Activated naive CD4-positive, alpha-beta T cell treated with anti-CD3 and anti-CD28 coated beads for 36 hours (primary cell): ENCODE measurements at regions of chr5 and their contacts with region 1.

Region 1: GRCh38 chr5:147188200-147189108 is 46.4 kb upstream of the STK32A start:
- DNase-seq: peak; percentile 61
- H3K4me3 Mint-ChIP-seq: no peak overlapping the region
- H3K27ac Mint-ChIP-seq: no peak overlapping the region
- H3K4me1 Mint-ChIP-seq: no peaks in the 10 kb centered on the region
- H3K27me3 Mint-ChIP-seq: peaks cover 3% of the 10 kb centered on the region

Region 2: DNA sequence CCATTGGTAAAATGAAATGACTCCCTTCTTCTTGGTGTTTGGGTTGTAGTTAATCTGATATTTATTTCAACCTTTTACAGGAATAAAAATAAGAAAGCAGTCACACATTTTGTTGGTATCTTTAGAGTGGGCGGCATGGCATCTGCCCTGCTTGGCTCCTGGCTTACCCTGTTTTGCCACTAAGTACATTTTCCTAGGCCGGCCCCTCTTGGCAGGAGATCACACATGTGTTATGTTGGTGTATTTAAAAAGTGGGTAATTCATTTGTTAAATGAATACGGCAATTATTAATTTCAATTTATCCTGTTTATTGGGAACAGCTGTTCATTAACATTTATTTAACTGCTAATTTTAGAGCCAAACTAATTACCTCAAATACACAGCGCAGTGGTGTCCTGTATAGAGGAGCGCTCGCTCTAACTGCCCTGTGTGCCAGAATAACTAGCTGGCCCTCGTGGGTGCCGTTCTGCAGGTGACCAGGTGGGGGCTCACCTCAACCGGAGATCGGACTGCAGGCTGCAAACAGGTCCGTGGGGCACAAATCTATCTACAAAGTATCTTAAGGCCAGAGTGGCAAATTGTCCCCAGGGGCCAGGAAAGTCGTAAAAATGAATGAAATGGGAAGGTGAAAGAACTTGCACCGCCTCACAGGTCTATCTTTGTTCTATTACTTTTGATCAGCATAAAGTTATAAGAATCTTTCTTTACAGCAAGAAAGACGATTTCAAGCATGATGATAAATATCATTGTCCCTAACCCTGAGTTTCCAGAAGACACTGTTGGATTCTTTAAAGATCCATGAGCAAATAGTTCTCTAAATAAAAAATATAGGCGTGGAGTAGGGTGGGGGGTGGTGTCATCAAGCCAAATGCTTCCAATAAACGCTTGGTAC is 646.2 kb before region 1 on chr5:
- CTCF ChIA-PET with region 1: interaction called, 17 read pairs
- intact Hi-C with region 1: loop called (anchors 1 kb)
- DNase-seq: peak; percentile 81
- H3K4me3 Mint-ChIP-seq: no peak overlapping the region
- H3K27ac Mint-ChIP-seq: no peak overlapping the region
- H3K4me1 Mint-ChIP-seq: no peaks in the 10 kb centered on the region
- H3K27me3 Mint-ChIP-seq: no peaks in the 10 kb centered on the region

Region 3: GRCh38 chr5:146662229-146662628 is 526.2 kb before region 1 on chr5:
- CTCF ChIA-PET with region 1: no interaction called
- intact Hi-C with region 1: loop called (anchors 1 kb)
- DNase-seq: no peak
- H3K4me3 Mint-ChIP-seq: no peak overlapping the region
- H3K27ac Mint-ChIP-seq: no peak overlapping the region
- H3K4me1 Mint-ChIP-seq: peaks cover 9% of the 10 kb centered on the region
- H3K27me3 Mint-ChIP-seq: no peaks in the 10 kb centered on the region

Region 4: GRCh38 chr5:147098233-147098790 is 90.1 kb before region 1 on chr5:
- CTCF ChIA-PET with region 1: interaction called, 18 read pairs
- intact Hi-C with region 1: loop called (anchors 1 kb)
- DNase-seq: peak; percentile 19
- H3K4me3 Mint-ChIP-seq: no peak overlapping the region
- H3K27ac Mint-ChIP-seq: no peak overlapping the region
- H3K4me1 Mint-ChIP-seq: no peaks in the 10 kb centered on the region
- H3K27me3 Mint-ChIP-seq: no peaks in the 10 kb centered on the region

Region 5: DNA sequence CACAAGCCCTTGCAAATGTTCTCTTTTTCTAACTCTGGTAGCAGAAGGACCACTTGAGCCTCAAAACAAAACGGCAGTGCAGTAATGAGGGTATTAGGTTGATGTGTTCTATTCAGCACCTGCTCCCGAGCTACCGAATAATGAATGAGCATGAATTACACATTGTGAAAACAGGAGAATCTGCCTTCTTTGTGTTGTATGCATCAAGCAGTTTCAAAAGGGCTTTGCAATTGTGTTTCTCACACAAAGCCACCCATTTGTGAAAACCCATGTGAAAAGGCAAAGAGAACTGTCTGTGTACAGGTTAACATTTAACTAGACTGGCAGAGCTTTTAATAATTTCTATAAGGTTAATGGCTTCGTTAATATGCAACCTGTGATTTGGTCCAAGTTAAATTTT is 144.2 kb after region 1 on chr5:
- CTCF ChIA-PET with region 1: no interaction called
- intact Hi-C with region 1: no loop called
- DNase-seq: no peak
- H3K4me3 Mint-ChIP-seq: no peak overlapping the region
- H3K27ac Mint-ChIP-seq: no peak overlapping the region
- H3K4me1 Mint-ChIP-seq: no peaks in the 10 kb centered on the region
- H3K27me3 Mint-ChIP-seq: no peaks in the 10 kb centered on the region

Region 6: GRCh38 chr5:147369742-147370374 is 181.4 kb after region 1 on chr5:
- CTCF ChIA-PET with region 1: no interaction called
- intact Hi-C with region 1: no loop called
- DNase-seq: no peak
- H3K4me3 Mint-ChIP-seq: no peak overlapping the region
- H3K27ac Mint-ChIP-seq: no peak overlapping the region
- H3K4me1 Mint-ChIP-seq: no peaks in the 10 kb centered on the region
- H3K27me3 Mint-ChIP-seq: no peaks in the 10 kb centered on the region